SK-N-SH (cell line): ENCODE measurements at regions of chr10 and their contacts with region 1.

Region 1: DNA sequence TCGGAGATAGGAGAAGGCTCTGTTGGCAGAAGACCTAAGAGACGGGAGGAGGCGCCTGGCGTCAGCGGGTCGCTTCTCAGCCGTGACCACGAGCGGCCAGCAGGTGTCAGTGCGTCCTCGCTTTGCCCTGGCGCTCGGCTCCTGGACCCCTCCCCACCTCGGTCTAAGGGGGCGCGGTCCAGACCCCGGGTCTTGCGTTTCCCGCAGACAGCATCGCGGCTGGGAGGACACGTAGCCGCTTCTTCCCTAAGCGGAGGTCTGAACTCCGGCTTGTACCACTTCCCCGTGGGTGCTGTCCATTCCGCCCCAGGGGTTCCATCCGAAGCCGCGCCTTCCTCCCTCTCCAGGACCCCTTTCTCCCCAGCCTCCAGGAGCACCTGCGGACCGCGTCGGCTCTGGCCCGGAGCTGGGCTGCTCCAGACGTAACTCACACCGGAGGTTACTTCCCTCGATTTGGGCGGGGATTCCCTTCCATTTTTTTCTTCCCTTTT is 593 bp upstream of the ADRA2A start:
- DNase-seq: peak; percentile 93
- H3K4me3 ChIP-seq: peak overlapping the region; percentile 48 to 70
- H3K27ac ChIP-seq: no peak overlapping the region
- H3K4me1 ChIP-seq: peaks cover 0 to 18% of the 10 kb centered on the region in 2 experiments; a peak in 1 of 4 replicates
- H3K27me3 ChIP-seq: peaks cover 42% of the 10 kb centered on the region
- CTCF ChIP-seq: peak; percentile 75
- EP300 ChIP-seq: no peak
- RAD21 ChIP-seq: peak; percentile 88

Region 2: DNA sequence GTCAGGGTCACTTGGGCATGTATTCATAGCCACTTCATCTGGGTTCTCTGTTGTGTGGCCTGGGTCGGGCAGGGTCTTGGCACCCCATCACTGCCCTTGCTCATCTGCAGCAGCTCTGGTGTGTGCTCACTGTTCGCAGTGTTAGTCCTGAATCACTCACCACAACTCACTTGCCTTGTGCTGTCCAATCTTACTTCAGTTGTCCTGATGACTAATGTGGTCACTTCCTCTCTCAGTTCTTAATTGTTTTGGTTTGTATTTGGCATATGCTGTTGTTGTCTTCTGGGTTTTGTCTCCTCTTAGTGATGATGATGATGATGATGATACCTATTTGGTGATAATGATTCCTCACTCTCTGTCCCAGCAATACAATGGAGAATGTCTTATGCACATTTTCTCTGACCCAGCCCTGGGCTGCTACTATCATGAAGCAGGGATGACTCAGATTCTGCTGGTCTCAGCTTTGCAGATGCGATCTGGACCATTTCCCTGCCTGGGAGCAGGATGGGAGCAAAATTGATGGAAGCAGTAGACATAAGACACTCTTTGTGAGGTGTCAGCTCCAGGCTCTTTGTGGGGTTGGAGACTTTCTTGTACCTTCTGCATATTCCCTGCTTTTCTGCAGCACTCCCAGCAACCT is 17.6 kb after region 1 on chr10:
- CTCF ChIA-PET with region 1: interaction called, 27 read pairs
- POLR2A ChIA-PET with region 1: no interaction called
- DNase-seq: no peak
- H3K4me3 ChIP-seq: no peak overlapping the region
- H3K27ac ChIP-seq: no peak overlapping the region
- H3K4me1 ChIP-seq: no peaks in the 10 kb centered on the region
- H3K27me3 ChIP-seq: no peaks in the 10 kb centered on the region
- CTCF ChIP-seq: no peak
- EP300 ChIP-seq: no peak
- RAD21 ChIP-seq: no peak

Region 3: DNA sequence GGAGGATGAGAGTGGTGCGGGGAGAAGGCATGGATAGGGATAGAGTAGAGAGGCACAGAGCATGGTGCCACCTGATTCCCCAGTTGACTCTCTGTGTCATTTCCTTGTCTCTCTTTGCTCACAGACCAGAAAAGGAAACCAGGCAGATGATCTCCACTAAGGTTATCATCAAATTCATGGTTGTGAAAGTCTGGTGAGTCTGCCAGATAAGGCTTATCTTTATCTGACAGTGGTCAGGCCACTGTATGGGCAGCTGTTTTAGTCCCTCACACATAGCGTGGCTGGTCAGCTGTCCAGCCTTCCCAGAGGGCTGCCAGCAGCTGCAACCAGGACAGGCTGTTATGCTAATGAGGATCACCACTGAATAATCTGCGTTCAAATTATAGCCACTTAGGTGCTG is 99.6 kb after region 1 on chr10:
- CTCF ChIA-PET with region 1: interaction called, 18 read pairs
- POLR2A ChIA-PET with region 1: no interaction called
- DNase-seq: peak; percentile 63
- H3K4me3 ChIP-seq: no peak overlapping the region
- H3K27ac ChIP-seq: peak overlapping the region in 1 of 2 experiments; percentile 83; a peak in 2 of 4 replicates
- H3K4me1 ChIP-seq: peaks cover 0 to 14% of the 10 kb centered on the region in 2 experiments; a peak in 2 of 4 replicates
- H3K27me3 ChIP-seq: no peaks in the 10 kb centered on the region
- CTCF ChIP-seq: no peak
- EP300 ChIP-seq: peak in 1 of 2 experiments; percentile 96; a peak in 2 of 4 replicates
- RAD21 ChIP-seq: peak; percentile 8; the same call in 1 of the 2 replicates

Region 4: DNA sequence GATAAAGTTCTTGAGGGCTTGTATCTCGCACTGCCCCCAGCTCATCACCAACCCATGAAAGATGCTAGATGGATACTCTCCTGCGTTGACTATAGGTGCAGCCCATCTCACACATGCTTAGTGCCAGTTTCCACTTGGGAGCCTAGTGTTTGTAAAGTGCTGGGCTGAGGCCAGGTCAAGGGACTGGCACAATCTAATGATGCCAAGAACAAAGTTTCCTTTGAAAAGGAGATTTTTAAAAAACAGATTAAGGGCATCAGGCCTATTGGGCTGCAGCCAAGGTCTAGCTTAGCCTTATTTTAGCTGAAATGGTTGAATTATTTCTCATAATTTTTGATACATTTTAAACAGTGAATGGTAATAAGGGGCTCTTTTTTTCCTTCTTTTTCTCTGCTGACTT is 259.6 kb after region 1 on chr10:
- CTCF ChIA-PET with region 1: interaction called, 11 read pairs
- POLR2A ChIA-PET with region 1: no interaction called
- DNase-seq: no peak
- H3K4me3 ChIP-seq: no peak overlapping the region
- H3K27ac ChIP-seq: no peak overlapping the region
- H3K4me1 ChIP-seq: no peaks in the 10 kb centered on the region
- H3K27me3 ChIP-seq: no peaks in the 10 kb centered on the region
- CTCF ChIP-seq: no peak
- EP300 ChIP-seq: no peak
- RAD21 ChIP-seq: no peak

Region 5: GRCh38 chr10:111598436-111599059 is 522.3 kb after region 1 on chr10:
- CTCF ChIA-PET with region 1: interaction called, 45 read pairs
- POLR2A ChIA-PET with region 1: no interaction called
- DNase-seq: peak; percentile 58
- H3K4me3 ChIP-seq: peak overlapping the region in 1 of 2 experiments; percentile 29; a peak in 1 of 4 replicates
- H3K27ac ChIP-seq: no peak overlapping the region
- H3K4me1 ChIP-seq: no peaks in the 10 kb centered on the region; a peak in 1 of 4 replicates
- H3K27me3 ChIP-seq: no peaks in the 10 kb centered on the region
- CTCF ChIP-seq: peak; percentile 58
- EP300 ChIP-seq: no peak
- RAD21 ChIP-seq: peak; percentile 78